ENCODE measurements at regions of chr11 and their contacts with region 1.

Region 1: DNA sequence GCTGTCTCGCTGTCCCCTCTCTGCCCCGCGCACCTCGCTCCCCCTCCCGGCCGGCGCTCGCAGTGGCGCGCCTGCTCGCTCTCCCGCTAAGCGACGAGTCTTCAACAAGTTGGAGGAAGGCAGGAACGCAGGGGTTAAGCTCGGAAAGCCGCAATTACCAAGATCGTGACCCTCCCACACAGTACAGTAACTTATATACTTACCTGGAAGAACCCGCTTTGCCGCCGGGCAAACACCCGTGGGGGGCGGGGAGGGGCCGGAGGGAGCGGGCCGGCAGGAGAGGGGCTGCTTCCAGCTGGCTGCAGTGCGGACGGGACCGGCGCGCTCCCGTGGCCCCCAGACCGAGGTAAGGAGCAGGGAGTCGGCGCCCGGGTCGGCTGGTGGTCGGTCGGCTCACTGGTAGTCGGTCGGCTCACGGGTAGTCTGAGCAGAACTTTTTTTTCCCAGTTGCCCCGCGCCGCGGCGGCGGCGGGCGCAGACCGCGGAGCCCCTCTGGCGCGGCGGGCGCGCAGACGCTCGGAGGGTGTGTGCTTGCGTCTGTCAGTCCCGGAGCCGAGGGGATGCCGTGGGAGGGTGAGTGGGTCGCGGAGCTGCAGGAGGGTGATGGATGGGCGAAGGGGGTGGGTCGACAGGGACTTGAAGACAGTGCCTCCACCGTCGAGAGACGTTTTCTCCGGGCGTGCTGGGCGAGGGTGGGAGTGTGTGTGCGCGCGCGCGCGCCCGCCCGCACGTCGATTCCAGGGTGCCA is 101.2 kb upstream of the HSD17B12 start:
- DNase-seq: peak; percentile 74
- ATAC-seq: peak; percentile 19
- H3K4me3 Mint-ChIP-seq: peak overlapping the region; percentile 86
- H3K27ac Mint-ChIP-seq: no peak overlapping the region
- H3K4me1 Mint-ChIP-seq: peaks cover 55% of the 10 kb centered on the region
- H3K27me3 Mint-ChIP-seq: peaks cover 99% of the 10 kb centered on the region
- CTCF ChIP-seq: no peak

Region 2: GRCh38 chr11:43467958-43468357 is 111.4 kb before region 1 on chr11:
- CTCF ChIA-PET with region 1: no interaction called
- POLR2A ChIA-PET with region 1: no interaction called
- DNase-seq: no peak
- ATAC-seq: no peak
- H3K4me3 Mint-ChIP-seq: no peak overlapping the region
- H3K27ac Mint-ChIP-seq: no peak overlapping the region
- H3K4me1 Mint-ChIP-seq: no peaks in the 10 kb centered on the region
- H3K27me3 Mint-ChIP-seq: no peaks in the 10 kb centered on the region
- CTCF ChIP-seq: no peak

Region 3: DNA sequence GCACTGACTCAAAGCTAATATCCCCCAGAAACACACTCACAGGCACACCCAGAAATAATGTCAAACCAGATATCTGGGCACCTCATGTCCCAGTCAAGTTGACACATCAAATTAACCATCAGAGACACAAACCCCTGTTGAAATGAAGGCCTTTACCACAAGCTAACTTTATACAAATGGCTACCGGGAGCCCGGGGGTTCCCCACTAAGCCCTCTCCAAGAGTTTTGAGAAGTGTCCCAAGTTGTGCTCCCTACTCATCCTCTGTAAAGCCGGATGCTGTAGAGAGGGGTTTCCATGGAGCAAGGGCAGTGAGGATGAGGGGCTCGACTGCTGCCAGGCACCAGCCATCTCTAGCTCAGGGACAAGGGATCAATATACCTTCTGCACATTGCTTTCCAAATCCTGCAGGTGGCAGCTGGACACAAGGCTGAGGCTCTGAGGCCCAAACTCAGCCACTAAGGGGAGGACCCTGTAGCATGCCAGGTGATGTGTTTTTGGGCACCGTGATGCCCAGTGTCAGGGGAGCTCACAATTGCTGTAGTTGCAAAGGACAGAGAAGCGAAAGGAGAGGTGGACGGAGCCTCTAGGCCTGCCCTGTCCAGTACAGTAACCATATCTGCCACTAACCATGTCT is 74.9 kb before region 1 on chr11:
- CTCF ChIA-PET with region 1: interaction called, 302 read pairs
- POLR2A ChIA-PET with region 1: no interaction called
- DNase-seq: peak; percentile 44
- ATAC-seq: peak; percentile 91
- H3K4me3 Mint-ChIP-seq: no peak overlapping the region
- H3K27ac Mint-ChIP-seq: no peak overlapping the region
- H3K4me1 Mint-ChIP-seq: peaks cover 9% of the 10 kb centered on the region
- H3K27me3 Mint-ChIP-seq: peaks cover 10% of the 10 kb centered on the region
- CTCF ChIP-seq: no peak; the same call in 1 of the 2 replicates

Region 4: GRCh38 chr11:43547889-43548381 is 31.4 kb before region 1 on chr11:
- CTCF ChIA-PET with region 1: interaction called, 15 read pairs
- POLR2A ChIA-PET with region 1: no interaction called
- DNase-seq: peak; percentile 58
- ATAC-seq: peak; percentile 39
- H3K4me3 Mint-ChIP-seq: 0 out of 2 replicates have a peak overlapping the region, but pooled peaks have one; percentile 31
- H3K27ac Mint-ChIP-seq: no peak overlapping the region
- H3K4me1 Mint-ChIP-seq: peaks cover 11% of the 10 kb centered on the region
- H3K27me3 Mint-ChIP-seq: peaks cover 70% of the 10 kb centered on the region
- CTCF ChIP-seq: no peak

Region 5: DNA sequence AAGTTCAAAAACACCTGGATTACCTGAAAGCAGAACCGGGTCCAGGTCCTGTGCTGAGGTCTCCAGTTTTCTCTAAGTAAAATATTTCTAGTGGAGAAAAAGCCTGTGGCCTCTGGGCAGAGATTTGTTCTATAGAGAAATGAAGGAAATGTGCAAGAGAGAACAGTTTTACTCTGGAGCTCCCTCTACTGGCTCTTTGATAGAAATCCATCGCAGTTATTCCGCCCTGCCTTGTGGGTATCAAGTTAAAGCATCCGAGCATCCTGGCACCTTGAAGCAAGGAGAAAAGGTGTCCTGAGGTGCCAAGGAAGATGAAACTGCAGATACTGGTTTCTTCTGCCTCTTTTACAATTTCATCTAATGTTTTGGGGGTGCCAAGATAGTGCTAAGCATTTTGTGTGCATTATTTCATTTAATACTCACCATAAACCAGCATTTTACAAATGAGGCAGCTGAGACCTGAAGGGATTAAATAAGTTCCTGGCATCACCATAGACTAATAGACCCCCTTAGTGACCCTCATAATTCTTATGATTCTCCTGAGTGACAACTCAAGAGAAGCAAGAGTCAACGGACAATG is 11.9 kb before region 1 on chr11:
- CTCF ChIA-PET with region 1: interaction called, 106 read pairs
- POLR2A ChIA-PET with region 1: no interaction called
- DNase-seq: no peak
- ATAC-seq: peak; percentile 88
- H3K4me3 Mint-ChIP-seq: no peak overlapping the region
- H3K27ac Mint-ChIP-seq: no peak overlapping the region
- H3K4me1 Mint-ChIP-seq: no peaks in the 10 kb centered on the region
- H3K27me3 Mint-ChIP-seq: peaks cover 57% of the 10 kb centered on the region
- CTCF ChIP-seq: peak; percentile 61; the same call in 1 of the 2 replicates

Region 6: GRCh38 chr11:43708776-43709175 is 129.4 kb after region 1 on chr11:
- CTCF ChIA-PET with region 1: interaction called, 33 read pairs
- POLR2A ChIA-PET with region 1: no interaction called
- DNase-seq: no peak
- ATAC-seq: 0 out of 2 replicates have a peak, but pooled peaks have one; percentile 30
- H3K4me3 Mint-ChIP-seq: no peak overlapping the region
- H3K27ac Mint-ChIP-seq: no peak overlapping the region
- H3K4me1 Mint-ChIP-seq: 0 out of 2 replicates have a peak, but pooled peaks cover 10% of the 10 kb centered on the region
- H3K27me3 Mint-ChIP-seq: no peaks in the 10 kb centered on the region
- CTCF ChIP-seq: no peak

Region 7: GRCh38 chr11:43852057-43852636 is 272.8 kb after region 1 on chr11:
- CTCF ChIA-PET with region 1: interaction called, 35 read pairs
- POLR2A ChIA-PET with region 1: no interaction called
- DNase-seq: peak; percentile 77
- ATAC-seq: peak; percentile 97
- H3K4me3 Mint-ChIP-seq: no peak overlapping the region
- H3K27ac Mint-ChIP-seq: no peak overlapping the region
- H3K4me1 Mint-ChIP-seq: no peaks in the 10 kb centered on the region
- H3K27me3 Mint-ChIP-seq: no peaks in the 10 kb centered on the region
- CTCF ChIP-seq: peak; percentile 76